B cell (primary cell): ENCODE measurements at regions of chr10 and their contacts with region 1.

Region 1: DNA sequence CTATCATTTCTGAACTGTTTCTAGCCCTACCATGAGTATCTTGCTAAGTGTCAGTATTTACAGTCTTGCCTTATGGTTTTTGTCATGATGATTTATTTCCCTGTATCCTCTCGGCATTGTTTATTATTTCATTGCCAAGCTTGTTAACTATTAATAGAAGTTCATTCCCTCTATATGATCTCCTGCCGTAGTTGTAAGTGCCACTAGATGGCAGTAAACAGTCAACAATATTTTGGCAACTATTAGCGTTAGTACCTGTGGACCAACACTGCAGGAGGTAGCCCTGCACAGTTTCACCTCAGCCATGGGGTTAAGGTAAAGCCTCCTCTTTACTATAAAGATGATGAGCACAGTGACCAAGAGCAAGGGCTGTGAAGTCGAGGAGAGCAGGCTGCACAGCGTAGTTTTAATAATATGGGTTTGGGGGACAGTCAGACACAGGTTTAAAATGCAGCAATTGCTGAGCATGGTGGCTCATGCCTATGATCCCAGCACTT is 26.1 kb upstream of the CCNJ start:
- DNase-seq: peak; percentile 74
- ATAC-seq: peak; percentile 61
- H3K4me3 ChIP-seq: no peak overlapping the region
- H3K4me3 Mint-ChIP-seq: no peak overlapping the region
- H3K27ac ChIP-seq: no peak overlapping the region
- H3K27ac Mint-ChIP-seq: no peak overlapping the region
- H3K4me1 ChIP-seq: peaks cover 0 to 5% of the 10 kb centered on the region in 2 donors
- H3K4me1 Mint-ChIP-seq: peaks cover 4% of the 10 kb centered on the region
- H3K27me3 ChIP-seq: no peaks in the 10 kb centered on the region
- H3K27me3 Mint-ChIP-seq: no peaks in the 10 kb centered on the region
- CTCF ChIP-seq: peak; percentile 85

Region 2: GRCh38 chr10:95664543-95664942 is 352.7 kb before region 1 on chr10:
- CTCF ChIA-PET with region 1: no interaction called
- POLR2A ChIA-PET with region 1: no interaction called
- intact Hi-C with region 1: no loop called
- DNase-seq: no peak
- ATAC-seq: no peak
- H3K4me3 ChIP-seq: no peak overlapping the region
- H3K4me3 Mint-ChIP-seq: no peak overlapping the region
- H3K27ac ChIP-seq: no peak overlapping the region
- H3K27ac Mint-ChIP-seq: no peak overlapping the region
- H3K4me1 ChIP-seq: no peaks in the 10 kb centered on the region
- H3K4me1 Mint-ChIP-seq: no peaks in the 10 kb centered on the region
- H3K27me3 ChIP-seq: no peaks in the 10 kb centered on the region
- H3K27me3 Mint-ChIP-seq: no peaks in the 10 kb centered on the region
- CTCF ChIP-seq: no peak

Region 3: DNA sequence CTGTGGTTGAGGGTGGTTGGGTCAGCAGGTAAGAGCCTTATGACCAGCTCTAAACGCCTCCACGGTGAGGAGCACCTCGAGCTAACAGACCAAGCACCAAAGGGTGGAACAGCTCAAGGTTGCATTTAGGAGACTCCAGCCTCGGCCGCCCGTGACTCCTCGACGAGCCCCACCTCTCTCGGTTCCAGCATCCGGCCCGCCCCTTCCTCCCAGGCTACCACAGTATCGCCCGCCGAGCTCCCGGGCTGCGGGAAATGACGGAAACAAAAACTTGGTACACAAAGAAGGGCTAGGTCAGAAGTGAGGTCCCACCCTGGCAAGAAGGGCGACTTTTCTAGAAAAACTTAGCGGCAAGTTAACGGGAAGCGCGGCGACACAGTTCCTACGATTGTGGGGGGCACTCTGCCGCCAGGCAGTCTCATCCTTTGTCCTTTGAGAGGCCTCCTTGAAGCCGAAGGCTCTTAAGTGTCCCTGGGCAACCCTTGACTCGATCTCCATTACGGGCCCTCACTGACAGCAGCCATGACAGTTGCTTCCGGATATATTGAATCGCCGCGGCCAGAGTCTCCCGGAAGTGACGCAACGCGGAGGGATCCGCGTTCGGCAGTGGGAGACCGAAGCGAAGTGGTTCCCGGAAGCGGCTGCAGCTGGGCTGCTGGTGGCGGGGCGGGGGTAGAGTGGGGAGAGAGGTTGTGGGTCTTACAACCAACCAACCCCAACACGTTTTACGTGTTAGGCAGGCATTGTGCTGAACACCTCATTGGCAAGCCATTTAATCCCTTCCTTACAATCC is 72.6 kb after region 1 on chr10:
- CTCF ChIA-PET with region 1: interaction called, 5 read pairs
- POLR2A ChIA-PET with region 1: no interaction called
- intact Hi-C with region 1: loop called (anchors 2 kb)
- DNase-seq: peak; percentile 98
- ATAC-seq: peak; percentile 88
- H3K4me3 ChIP-seq: peak overlapping the region; percentile 67 to 97 (median 96)
- H3K4me3 Mint-ChIP-seq: peak overlapping the region; percentile 98
- H3K27ac ChIP-seq: peak overlapping the region; percentile 89 to 96
- H3K27ac Mint-ChIP-seq: peak overlapping the region; percentile 99
- H3K4me1 ChIP-seq: peaks cover 6 to 9% of the 10 kb centered on the region in 2 donors
- H3K4me1 Mint-ChIP-seq: peaks cover 10% of the 10 kb centered on the region
- H3K27me3 ChIP-seq: peaks cover 0 to 31% (median 20%) of the 10 kb centered on the region in 4 experiments
- H3K27me3 Mint-ChIP-seq: peaks cover 33% of the 10 kb centered on the region
- CTCF ChIP-seq: no peak

Region 4: DNA sequence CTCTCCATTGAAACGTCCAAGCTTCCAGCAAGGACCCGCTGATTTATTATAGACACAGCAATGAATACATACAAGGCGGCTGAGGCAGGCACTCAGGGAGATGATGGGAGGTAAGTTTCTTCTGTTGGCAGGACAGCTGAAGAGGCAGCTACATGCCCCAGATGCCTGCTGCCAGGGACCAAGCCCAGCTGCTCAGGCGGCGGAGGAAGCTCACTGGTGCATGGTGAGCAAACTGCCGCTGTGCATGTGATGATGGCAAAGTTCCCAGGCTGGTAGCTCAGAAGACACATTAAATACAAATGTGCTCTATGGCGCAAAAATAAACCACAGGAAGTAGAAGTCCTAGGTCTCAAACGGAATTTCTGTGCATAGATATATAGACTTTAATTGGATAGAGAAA is 289.3 kb after region 1 on chr10:
- CTCF ChIA-PET with region 1: interaction called, 13 read pairs
- POLR2A ChIA-PET with region 1: no interaction called
- intact Hi-C with region 1: no loop called
- DNase-seq: peak; percentile 75
- ATAC-seq: peak; percentile 95
- H3K4me3 ChIP-seq: no peak overlapping the region
- H3K4me3 Mint-ChIP-seq: peak overlapping the region; percentile 53
- H3K27ac ChIP-seq: no peak overlapping the region
- H3K27ac Mint-ChIP-seq: no peak overlapping the region
- H3K4me1 ChIP-seq: peaks cover 25 to 27% of the 10 kb centered on the region in 2 donors
- H3K4me1 Mint-ChIP-seq: peaks cover 26% of the 10 kb centered on the region
- H3K27me3 ChIP-seq: peaks cover 0 to 23% (median 11%) of the 10 kb centered on the region in 4 experiments
- H3K27me3 Mint-ChIP-seq: peaks cover 34% of the 10 kb centered on the region
- CTCF ChIP-seq: no peak

Region 5: DNA sequence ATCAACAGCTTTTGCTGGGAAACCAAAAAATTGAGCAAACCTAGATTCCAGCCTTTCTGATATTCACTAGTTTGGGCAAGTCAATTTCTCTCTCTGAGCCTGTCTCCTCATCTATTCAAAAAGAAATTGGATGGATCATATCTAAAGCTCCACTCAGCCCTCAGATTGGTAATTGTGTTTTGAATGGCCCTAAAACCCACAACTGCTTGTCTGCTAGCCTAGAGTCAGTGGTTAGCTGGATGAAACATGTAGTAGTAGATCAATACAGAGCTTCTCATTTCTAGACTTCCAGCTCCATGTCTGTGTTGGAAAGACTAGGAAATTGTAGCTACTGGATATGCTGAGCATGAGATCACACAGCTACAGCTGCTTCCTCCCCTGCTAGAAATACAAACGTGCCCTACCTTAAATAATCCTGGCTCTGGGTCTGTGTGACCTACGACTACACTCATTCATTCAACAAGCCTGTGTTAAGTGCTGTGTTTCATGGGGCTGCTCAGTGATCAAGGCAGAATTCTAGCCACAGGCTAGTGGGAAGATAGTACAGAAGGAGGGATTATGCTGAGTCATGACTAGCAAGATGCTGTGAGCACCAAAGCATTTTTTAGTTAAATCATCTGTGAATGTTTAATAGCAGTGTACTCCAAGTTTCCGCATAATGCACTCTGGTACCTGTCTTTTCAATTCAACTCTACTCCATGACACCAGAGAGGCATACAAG is 302.7 kb after region 1 on chr10:
- CTCF ChIA-PET with region 1: interaction called, 14 read pairs
- POLR2A ChIA-PET with region 1: no interaction called
- intact Hi-C with region 1: loop called (anchors 5 kb)
- DNase-seq: no peak
- ATAC-seq: no peak
- H3K4me3 ChIP-seq: no peak overlapping the region
- H3K4me3 Mint-ChIP-seq: no peak overlapping the region
- H3K27ac ChIP-seq: no peak overlapping the region
- H3K27ac Mint-ChIP-seq: no peak overlapping the region
- H3K4me1 ChIP-seq: no peaks in the 10 kb centered on the region
- H3K4me1 Mint-ChIP-seq: no peaks in the 10 kb centered on the region
- H3K27me3 ChIP-seq: peaks cover 0 to 5% (median 0%) of the 10 kb centered on the region in 4 experiments
- H3K27me3 Mint-ChIP-seq: peaks cover 27% of the 10 kb centered on the region
- CTCF ChIP-seq: no peak

Region 6: DNA sequence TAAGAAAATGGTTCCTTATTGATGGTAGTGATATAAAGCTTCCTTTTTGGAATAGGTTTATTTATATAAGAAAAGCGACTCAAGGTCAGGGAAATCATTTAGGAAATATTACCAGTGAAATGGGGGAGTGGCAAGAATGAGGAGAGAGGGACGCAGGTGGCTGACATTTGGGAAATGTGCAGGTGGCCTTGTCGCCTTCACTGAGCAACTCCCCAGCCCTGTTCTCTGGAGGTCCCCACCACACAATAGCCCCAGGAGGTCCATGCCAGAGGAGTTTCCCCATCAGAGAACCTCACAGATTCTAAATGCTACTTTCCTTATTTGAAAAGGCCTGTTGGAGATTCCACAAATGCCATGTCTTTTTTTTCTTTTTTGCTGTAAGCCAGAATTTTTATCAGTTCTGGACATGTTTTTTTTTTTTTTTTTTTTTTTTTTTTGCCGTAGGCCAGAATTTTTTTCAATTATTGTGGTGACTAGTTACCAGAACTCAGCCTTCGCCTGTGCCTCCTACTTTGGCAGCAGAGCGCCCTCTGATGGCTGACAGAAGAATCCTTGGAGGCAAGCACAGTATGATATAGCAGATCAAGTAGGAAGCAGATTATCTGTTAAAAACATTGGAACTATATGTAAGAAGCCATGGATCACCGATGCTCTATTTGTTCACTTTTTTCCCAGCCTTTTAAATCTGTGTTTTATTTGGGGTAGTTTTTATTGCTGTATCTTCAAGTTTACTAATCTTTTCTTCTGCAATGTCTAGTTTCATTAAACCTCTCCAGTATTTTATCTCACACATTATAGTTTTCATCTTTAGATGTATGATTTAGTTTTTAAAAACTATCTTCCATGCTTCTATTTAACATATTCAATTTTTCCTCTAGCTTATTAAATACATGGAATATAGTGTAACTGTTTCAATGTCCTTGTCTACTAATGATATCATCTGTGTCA is 323.0 kb after region 1 on chr10:
- CTCF ChIA-PET with region 1: interaction called, 65 read pairs
- POLR2A ChIA-PET with region 1: no interaction called
- intact Hi-C with region 1: loop called (anchors 1 kb)
- DNase-seq: peak; percentile 70
- ATAC-seq: peak; percentile 73
- H3K4me3 ChIP-seq: no peak overlapping the region
- H3K4me3 Mint-ChIP-seq: no peak overlapping the region
- H3K27ac ChIP-seq: no peak overlapping the region
- H3K27ac Mint-ChIP-seq: no peak overlapping the region
- H3K4me1 ChIP-seq: peaks cover 4 to 10% of the 10 kb centered on the region in 2 donors
- H3K4me1 Mint-ChIP-seq: peaks cover 10% of the 10 kb centered on the region
- H3K27me3 ChIP-seq: no peaks in the 10 kb centered on the region
- H3K27me3 Mint-ChIP-seq: peaks cover 2% of the 10 kb centered on the region
- CTCF ChIP-seq: peak; percentile 84

Region 7: DNA sequence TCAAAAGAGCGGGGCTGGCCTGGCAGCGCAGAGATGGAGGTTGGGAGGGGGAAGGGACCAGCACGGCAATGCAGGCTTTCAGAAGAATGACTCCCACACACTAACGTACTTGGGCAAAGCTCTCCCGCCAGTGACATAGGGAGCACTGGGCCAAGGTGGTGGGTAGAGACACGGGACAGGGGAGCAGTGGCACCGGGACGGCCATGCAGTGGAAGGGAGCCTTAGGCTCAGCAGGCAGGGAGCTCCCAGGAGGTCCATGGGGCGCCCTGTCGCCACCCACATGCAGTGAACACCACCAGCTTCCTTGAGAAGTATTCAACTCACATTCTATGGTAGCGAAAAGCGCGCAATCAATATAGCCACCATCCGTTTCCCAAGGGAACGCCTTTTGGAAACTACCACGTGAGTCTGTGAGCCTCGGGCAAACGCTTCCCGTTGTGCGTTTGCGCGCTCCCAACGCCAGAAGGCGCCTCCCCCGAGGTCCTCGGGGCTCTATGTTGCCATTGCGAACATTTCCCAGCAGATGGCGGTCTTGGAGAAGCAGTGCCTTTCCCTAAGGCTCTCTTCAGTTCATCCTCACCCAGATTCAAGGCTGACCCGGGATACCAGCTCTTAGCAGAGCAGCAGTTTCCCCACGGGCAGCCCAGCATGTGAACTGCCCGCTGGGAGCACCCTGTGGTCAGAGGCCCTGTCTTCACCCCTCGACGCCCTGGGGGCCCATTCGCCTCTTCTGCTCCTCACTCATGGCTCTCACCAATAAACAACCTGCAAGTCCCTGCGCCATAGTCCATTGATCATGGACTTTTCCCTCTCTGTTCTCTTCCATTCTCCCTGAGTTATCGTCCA is 358.0 kb after region 1 on chr10:
- CTCF ChIA-PET with region 1: interaction called, 10 read pairs
- POLR2A ChIA-PET with region 1: no interaction called
- intact Hi-C with region 1: no loop called
- DNase-seq: peak; percentile 85
- ATAC-seq: peak; percentile 91
- H3K4me3 ChIP-seq: peak overlapping the region; percentile 8 to 63 (median 42)
- H3K4me3 Mint-ChIP-seq: peak overlapping the region; percentile 86
- H3K27ac ChIP-seq: no peak overlapping the region
- H3K27ac Mint-ChIP-seq: no peak overlapping the region
- H3K4me1 ChIP-seq: peaks cover 6 to 13% of the 10 kb centered on the region in 2 donors
- H3K4me1 Mint-ChIP-seq: peaks cover 15% of the 10 kb centered on the region
- H3K27me3 ChIP-seq: peaks cover 0 to 8% (median 0%) of the 10 kb centered on the region in 4 experiments
- H3K27me3 Mint-ChIP-seq: peaks cover 32% of the 10 kb centered on the region
- CTCF ChIP-seq: peak; percentile 99

Region 8: GRCh38 chr10:96840841-96841518 is 823.7 kb after region 1 on chr10:
- CTCF ChIA-PET with region 1: no interaction called
- POLR2A ChIA-PET with region 1: no interaction called
- intact Hi-C with region 1: no loop called
- DNase-seq: no peak
- ATAC-seq: peak; percentile 69
- H3K4me3 ChIP-seq: no peak overlapping the region
- H3K4me3 Mint-ChIP-seq: peak overlapping the region; percentile 26
- H3K27ac ChIP-seq: no peak overlapping the region
- H3K27ac Mint-ChIP-seq: no peak overlapping the region
- H3K4me1 ChIP-seq: peaks cover 7 to 45% of the 10 kb centered on the region in 2 donors
- H3K4me1 Mint-ChIP-seq: peaks cover 65% of the 10 kb centered on the region
- H3K27me3 ChIP-seq: no peaks in the 10 kb centered on the region
- H3K27me3 Mint-ChIP-seq: no peaks in the 10 kb centered on the region
- CTCF ChIP-seq: no peak